Activated T-helper 2 cell treated with anti-CD3 and anti-CD28 coated beads, Interferon-gamma antibody, Interleukin-2, Interleukin-4, amounts not matched to agents 10 μg/mL and 5 μg/mL and 100 μg/mL, durations not matched to agents 14 hours and 24 hours and 36 hours (primary cell): ENCODE measurements at regions of chr21 and their contacts with region 1.

Region 1: DNA sequence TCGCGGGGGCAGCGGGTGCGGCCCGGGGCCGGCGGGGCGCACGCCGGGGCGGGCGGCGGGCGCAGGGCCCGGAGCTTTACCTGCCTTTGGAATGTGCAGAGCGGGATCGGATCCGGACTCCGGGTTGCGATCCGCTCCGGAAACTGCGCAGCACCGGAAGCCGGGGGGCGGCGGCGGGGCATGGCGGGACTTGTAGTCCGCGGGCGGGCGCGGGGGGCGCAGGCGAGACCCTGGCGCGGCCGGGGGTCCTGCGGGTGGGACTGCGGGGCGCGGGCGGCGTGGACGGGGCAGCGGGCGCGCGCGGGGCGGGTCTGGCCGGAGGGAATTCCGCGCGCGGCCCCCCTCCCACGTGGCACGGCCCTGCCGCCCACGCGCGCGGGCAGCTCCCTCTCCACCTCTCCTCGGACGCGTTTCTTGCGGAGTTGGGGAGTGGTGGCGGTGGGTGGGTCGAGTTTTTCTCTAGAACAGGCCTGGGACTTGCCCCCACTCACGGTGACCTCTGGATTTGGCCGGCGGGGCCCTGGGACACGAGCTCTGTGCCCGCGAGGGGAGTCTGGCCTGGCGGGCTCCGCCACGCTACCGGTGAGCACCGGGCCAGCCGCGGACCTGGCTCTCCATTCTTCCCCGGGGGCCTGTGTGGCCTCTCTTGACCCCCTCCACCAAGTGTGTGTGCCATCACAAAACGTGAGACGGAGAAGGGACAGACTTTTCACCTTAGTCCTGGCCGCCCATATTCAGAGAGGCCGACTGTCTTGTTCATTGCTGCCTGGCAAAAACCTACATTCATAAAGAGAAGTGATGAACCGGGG is at the start of gene PRDM15:
- DNase-seq: peak; percentile 80
- H3K4me3 Mint-ChIP-seq: peak within 1 kb of the TSS; percentile 90
- H3K27ac Mint-ChIP-seq: peak within 1 kb of the TSS; percentile 98
- H3K4me1 Mint-ChIP-seq: peaks cover 18% of the 10 kb centered on the region
- H3K27me3 Mint-ChIP-seq: no peaks in the 10 kb centered on the region
- total RNA-seq, gene PRDM15: 16.2 and 18.2 TPM in 2 replicates

Region 2: GRCh38 chr21:41899426-41900202 is 20.2 kb after region 1 on chr21:
- intact Hi-C with region 1: loop called (anchors 1 kb)
- DNase-seq: peak; percentile 33
- H3K4me3 Mint-ChIP-seq: peak overlapping the region; percentile 26
- H3K27ac Mint-ChIP-seq: peak overlapping the region; percentile 87
- H3K4me1 Mint-ChIP-seq: peaks cover 35% of the 10 kb centered on the region
- H3K27me3 Mint-ChIP-seq: no peaks in the 10 kb centered on the region

Region 3: GRCh38 chr21:41926117-41926806 is 46.9 kb after region 1 on chr21:
- intact Hi-C with region 1: loop called (anchors 2 kb)
- DNase-seq: peak; percentile 17
- H3K4me3 Mint-ChIP-seq: peak overlapping the region; percentile 86
- H3K27ac Mint-ChIP-seq: peak overlapping the region; percentile 93
- H3K4me1 Mint-ChIP-seq: peaks cover 52% of the 10 kb centered on the region
- H3K27me3 Mint-ChIP-seq: no peaks in the 10 kb centered on the region

Region 4: DNA sequence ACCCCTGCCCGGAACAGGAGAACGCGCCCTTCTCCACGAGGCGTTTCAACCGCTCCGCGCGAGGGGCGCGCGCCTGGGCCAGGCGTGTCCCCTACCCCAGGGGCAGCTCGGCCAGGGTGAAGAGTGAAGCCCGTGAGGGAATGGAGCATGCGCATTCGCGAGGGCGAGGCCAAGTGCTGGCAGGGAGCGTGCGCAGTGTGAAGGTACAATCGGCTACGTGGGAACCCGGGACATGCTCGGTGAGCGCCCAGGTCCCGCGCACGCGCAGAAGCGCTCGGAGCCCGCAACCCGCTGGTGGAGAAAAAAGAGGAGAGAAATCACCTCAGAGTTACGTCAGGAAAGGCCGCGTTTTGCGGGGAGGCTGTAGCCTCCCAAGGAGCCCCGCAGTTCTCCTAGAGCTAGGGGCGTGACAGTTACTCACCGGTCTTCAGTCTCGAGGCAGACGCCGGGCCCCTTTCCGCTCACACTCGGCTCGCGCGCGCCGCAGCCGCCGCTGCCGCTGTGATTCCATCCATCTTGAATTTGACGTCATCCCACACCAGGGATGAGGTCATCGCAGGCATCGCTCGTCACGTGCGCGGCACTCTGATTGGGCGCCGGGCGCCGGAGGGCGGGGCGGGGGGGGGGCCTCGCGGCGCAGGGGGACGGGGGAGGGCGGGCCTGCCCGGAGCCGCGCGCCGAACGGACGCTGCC is 130.6 kb after region 1 on chr21 and contains the start of gene ZBTB21:
- intact Hi-C with region 1: loop called (anchors 1 kb)
- DNase-seq: peak; percentile 97
- H3K4me3 Mint-ChIP-seq: peak within 1 kb of the TSS; percentile 94
- H3K27ac Mint-ChIP-seq: peak within 1 kb of the TSS; percentile 99
- H3K4me1 Mint-ChIP-seq: peaks cover 25% of the 10 kb centered on the region
- H3K27me3 Mint-ChIP-seq: peaks cover 18% of the 10 kb centered on the region
- total RNA-seq, gene ZBTB21: 24.5 and 25.7 TPM in 2 replicates

Region 5: DNA sequence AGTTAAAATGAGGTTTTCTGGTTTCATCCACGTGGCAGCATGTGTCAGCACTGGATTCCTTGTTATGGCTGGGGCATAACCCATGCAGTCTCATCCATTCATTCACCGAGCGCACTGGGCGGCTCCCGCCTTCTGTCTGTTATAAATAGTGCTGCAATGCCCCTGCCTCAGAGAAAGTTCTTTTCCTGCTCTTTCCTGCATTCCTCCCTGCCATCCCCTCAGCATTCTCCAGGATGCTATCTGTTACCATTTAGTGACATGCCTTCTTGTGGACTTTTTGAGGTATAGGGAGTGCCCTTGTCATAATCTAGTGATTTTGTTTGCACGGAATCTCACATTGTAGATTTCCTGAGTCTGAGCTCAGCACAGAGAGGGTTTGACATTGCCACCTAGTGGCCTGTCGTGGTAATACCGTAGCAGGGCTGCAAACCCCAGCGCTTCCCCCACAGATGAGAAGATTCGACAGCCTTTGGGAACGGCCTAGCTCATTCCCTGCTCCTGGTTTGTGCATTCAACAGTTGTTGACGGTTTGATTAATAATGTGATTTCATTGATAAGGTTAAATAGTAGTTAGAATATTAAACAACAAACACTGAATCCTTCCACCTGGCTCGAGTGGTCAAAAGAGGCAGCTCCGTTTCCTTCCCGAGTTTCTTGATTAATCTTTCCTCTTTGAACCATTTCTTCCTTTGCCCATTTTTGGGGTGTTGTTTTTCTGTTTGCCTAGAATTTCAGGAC is 238.0 kb after region 1 on chr21:
- intact Hi-C with region 1: loop called (anchors 5 kb)
- DNase-seq: peak; percentile 60
- H3K4me3 Mint-ChIP-seq: no peak overlapping the region
- H3K27ac Mint-ChIP-seq: peak overlapping the region; percentile 24
- H3K4me1 Mint-ChIP-seq: peaks cover 29% of the 10 kb centered on the region
- H3K27me3 Mint-ChIP-seq: peaks cover 43% of the 10 kb centered on the region